T47D (cell line): ENCODE measurements at regions of chr17 and their contacts with region 1.

Region 1: DNA sequence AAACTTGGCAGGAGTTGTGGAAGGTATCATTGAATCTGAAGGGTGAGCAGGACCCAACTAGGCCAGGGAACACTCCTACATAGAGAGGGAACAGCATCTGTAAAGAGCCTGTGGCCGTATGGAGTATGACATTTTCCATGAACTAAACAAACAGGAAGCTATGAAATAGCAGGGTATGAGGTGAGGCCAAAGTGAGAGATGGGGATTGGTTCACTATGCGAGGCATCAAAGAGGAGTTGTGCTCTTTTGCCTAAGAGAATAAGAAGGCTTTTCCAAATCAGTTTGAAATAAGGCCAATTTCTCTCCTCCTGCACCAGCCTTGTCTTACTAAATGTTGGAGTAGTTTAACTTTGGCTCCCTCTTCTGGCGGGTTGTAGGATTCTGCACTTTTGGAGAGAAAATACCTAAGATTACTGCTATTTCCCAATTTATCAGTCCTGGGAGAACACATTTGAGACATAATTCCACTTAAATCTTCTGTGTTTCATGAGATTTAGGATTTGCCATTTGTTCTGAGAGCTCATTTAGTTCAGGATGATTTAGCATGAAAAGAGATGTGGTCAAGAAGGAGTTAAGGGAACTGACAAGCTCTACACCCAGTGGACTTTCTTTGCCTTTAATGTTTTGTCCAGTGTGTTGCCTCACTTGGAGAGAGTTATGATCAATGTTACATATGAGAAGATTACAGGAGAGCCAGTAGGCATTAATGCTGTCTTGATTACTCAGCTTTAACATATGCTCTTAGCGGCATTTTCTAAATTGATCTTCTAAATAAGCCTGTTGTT is 55.4 kb downstream of the TNRC6C start:
- DNase-seq: peak; percentile 37 to 83

Region 2: GRCh38 chr17:77542551-77543490 is 471.1 kb before region 1 on chr17:
- in situ Hi-C with region 1: loop called (anchors 25 kb)
- DNase-seq: peak; percentile 87 to 91

Region 3: GRCh38 chr17:77881545-77881944 is 132.3 kb before region 1 on chr17:
- in situ Hi-C with region 1: no loop called
- DNase-seq: no peak